Stomach (tissue), 19 donors: ENCODE measurements at regions of chr1 and their contacts with region 1.

Region 1: DNA sequence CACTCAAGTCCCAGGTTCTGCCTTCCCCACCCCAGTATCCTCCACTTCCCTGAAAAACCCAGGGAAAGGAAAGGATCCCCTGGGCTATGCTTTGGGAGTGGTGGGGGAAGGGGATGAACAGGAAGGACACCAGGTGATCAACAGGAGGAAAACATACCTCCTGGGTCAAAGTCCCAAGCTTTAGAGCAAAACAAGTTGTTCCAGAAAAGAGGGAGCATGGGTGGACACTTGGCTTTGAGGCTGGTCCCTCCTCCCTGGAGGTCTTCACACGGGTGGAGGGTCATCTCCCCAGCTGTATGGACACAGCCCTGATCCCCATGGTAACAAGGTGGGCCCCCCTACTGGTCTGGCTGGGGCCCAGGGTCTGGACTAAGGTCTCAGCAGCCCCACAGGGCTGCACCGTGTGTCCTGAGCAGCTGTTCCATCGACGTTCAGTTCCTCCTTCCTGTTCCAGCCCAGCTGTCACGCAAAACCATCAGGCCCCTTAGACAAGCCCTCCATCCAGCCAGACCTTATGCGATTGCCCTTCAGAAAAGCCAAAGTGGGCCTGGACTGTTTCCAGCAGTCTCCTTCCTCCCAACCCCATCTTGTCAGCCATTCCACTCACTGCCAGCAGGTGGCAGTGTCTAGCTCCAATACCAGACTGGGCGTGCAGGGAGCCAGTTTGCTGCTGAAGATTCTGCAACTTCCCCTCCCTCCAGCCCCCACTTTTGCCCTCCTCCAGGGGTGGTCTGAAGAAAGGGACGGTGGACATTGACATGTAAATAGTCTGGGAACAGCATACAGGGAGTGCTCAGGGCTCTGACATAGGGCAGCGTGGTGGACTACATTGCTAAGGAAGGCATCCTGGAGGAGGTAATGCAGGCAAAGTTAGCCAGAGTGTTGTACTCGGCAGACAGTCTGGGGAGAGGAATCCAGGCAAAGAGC is 2.9 kb upstream of the PDZK1IP1 start:
- DNase-seq: peak; percentile 83 to 91
- H3K4me3 ChIP-seq: no peak overlapping the region
- H3K27ac ChIP-seq: peak overlapping the region in 3 of 5 donors; percentile 84 to 89 (median 86)
- H3K4me1 ChIP-seq: peaks cover 23 to 44% (median 36%) of the 10 kb centered on the region in 4 donors
- H3K27me3 ChIP-seq: peaks cover 0 to 4% (median 0%) of the 10 kb centered on the region in 3 donors
- CTCF ChIP-seq: peak in 5 of 7 experiments; percentile 86 to 94 (median 93)
- EP300 ChIP-seq: no peak
- POLR2A ChIP-seq: no peak

Region 2: DNA sequence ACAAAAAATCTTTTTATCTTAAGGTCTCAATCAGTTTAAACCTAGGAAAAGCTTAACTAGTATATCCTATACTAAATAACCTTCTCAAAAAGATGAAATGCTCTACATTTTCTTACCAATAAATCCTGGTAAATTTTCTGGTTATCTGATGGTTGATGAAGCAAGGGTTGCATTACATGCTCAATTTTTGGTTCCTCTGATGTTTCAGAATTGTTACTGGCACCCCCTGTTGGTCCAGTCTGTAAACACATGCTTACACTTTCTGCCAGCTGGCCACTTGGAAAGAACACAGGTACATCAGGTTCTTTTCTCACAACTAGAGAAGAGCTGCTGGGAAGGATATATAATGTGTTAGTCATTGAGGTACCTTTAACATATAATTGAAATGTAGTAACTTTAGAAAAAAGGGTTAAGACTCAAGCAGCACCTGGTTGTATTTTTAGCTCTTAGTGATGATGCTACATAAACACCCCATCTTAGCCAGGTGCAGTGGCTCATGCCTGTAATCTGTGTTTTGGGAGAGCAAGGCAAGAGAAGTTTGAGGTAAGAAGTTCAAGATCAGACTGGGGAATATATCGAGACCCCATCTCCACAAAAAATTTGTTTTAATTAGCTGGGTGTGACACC is 70.2 kb after region 1 on chr1:
- intact Hi-C with region 1: loop called (anchors 10 kb)
- DNase-seq: peak; percentile 44 to 57
- H3K4me3 ChIP-seq: no peak overlapping the region
- H3K27ac ChIP-seq: no peak overlapping the region
- H3K4me1 ChIP-seq: no peaks in the 10 kb centered on the region
- H3K27me3 ChIP-seq: no peaks in the 10 kb centered on the region
- CTCF ChIP-seq: peak in 5 of 7 experiments; percentile 28 to 47 (median 37)
- EP300 ChIP-seq: no peak
- POLR2A ChIP-seq: no peak

Region 3: GRCh38 chr1:47725992-47726855 is 533.5 kb after region 1 on chr1:
- intact Hi-C with region 1: loop called (anchors 10 kb)
- DNase-seq: peak; percentile 80 to 92
- H3K4me3 ChIP-seq: peak overlapping the region in 3 of 4 donors; percentile 8 to 13 (median 13)
- H3K27ac ChIP-seq: no peak overlapping the region
- H3K4me1 ChIP-seq: peaks cover 7 to 22% (median 18%) of the 10 kb centered on the region in 4 donors
- H3K27me3 ChIP-seq: peaks cover 16 to 61% (median 36%) of the 10 kb centered on the region in 3 donors
- CTCF ChIP-seq: peak in 5 of 7 experiments; percentile 58 to 83 (median 81)
- EP300 ChIP-seq: no peak
- POLR2A ChIP-seq: no peak